Activated CD4-positive, alpha-beta memory T cell treated with anti-CD3 and anti-CD28 coated beads for 36 hours (primary cell): ENCODE measurements at regions of chr6 and their contacts with region 1.

Region 1: GRCh38 chr6:16514249-16514648 is 247.0 kb downstream of the ATXN1 start:
- DNase-seq: peak; percentile 39
- H3K4me3 Mint-ChIP-seq: no peak overlapping the region
- H3K27ac Mint-ChIP-seq: no peak overlapping the region
- H3K4me1 Mint-ChIP-seq: peaks cover 79% of the 10 kb centered on the region
- H3K27me3 Mint-ChIP-seq: no peaks in the 10 kb centered on the region

Region 2: DNA sequence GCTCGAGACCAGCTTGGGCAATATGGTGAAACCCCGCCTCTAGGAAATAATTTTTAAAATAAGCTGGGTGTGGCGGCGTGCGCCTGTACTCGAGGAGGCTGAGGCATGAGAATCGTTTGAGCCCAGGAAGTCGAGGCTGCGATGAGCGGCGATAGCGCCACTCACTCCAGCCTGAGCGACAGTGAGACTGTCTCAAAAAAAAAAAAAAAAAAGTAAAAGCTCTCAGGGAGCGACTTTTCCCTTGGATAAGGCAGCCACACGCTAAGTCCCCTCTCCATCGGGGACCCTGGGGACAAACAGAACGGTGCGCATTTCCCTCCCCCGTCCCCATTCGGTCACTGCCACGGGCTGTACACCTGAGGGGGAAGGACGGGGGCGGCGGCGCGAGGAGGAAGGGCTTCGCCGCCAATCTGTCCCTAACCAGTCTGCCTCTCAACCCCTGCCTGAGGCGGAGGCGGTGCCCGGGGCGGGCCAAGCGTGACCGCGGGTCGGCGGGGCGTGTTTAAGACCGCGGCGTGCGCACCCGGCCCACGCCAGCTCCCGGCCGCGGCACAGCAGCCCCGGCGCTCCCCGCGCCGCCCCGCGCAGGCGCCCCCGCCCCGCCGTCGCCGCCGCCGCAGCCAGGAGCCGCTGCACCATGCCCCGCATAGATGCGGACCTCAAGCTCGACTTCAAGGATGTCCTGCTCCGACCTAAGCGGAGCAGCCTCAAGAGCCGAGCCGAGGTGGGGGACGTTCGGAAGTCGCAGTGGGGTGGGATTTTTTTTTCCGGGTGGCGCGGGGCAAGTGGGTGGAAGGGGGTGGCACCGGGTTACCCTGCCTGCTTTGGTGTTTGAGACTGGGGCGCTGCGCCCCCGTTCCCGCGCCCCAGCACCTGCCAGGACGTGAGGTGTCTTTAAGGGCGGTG is 275.9 kb before region 1 on chr6 and contains the start of gene GMPR:
- CTCF ChIA-PET with region 1: no interaction called
- POLR2A ChIA-PET with region 1: no interaction called
- intact Hi-C with region 1: no loop called
- DNase-seq: peak; percentile 82
- H3K4me3 Mint-ChIP-seq: peak within 1 kb of the TSS; percentile 75
- H3K27ac Mint-ChIP-seq: no peak within 1 kb of the TSS
- H3K4me1 Mint-ChIP-seq: peaks cover 23% of the 10 kb centered on the region
- H3K27me3 Mint-ChIP-seq: peaks cover 40% of the 10 kb centered on the region
- total RNA-seq, gene GMPR: 0.68 to 0.97 TPM

Region 3: GRCh38 chr6:16332175-16332542 is 182.1 kb before region 1 on chr6:
- CTCF ChIA-PET with region 1: interaction called, 10 read pairs
- POLR2A ChIA-PET with region 1: no interaction called
- intact Hi-C with region 1: loop called (anchors 1 kb)
- DNase-seq: peak; percentile 91
- H3K4me3 Mint-ChIP-seq: no peak overlapping the region
- H3K27ac Mint-ChIP-seq: no peak overlapping the region
- H3K4me1 Mint-ChIP-seq: peaks cover 9% of the 10 kb centered on the region
- H3K27me3 Mint-ChIP-seq: no peaks in the 10 kb centered on the region

Region 4: DNA sequence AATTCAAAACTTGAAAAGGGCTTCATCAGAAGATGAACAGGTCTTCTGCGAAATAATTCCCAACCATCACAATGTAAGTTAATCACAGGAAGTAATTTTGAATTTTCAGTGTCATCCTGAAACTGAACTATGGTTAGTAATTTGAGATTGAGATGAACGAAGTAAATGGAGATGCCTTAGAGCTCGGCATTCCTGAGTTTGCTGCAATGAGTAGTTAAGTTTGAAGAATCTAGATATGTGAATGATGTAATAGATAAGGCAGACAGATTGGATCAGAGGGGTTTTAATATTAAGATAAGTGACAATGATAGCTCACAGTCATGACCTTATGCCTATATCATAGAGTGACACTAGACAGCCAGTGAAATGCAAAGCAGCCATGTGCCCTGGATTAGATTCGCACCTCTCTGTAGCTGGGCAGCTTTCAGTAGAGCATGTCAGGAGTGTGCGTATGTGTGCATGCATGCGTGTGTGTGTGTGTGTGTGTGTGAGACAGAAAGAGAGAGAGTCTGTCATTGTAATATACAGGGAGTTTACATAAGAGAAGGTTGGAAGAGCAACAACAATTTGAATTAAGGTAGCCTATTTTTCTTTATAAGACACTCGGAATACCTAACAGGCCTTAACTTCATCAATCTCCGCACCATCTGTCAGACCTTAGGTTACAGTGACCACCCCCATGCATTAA is 42.9 kb before region 1 on chr6:
- CTCF ChIA-PET with region 1: interaction called, 23 read pairs
- POLR2A ChIA-PET with region 1: interaction called, 7 read pairs
- intact Hi-C with region 1: loop called (anchors 1 kb)
- DNase-seq: no peak
- H3K4me3 Mint-ChIP-seq: no peak overlapping the region
- H3K27ac Mint-ChIP-seq: peak overlapping the region; percentile 69
- H3K4me1 Mint-ChIP-seq: peaks cover 88% of the 10 kb centered on the region
- H3K27me3 Mint-ChIP-seq: no peaks in the 10 kb centered on the region

Region 5: GRCh38 chr6:16503970-16504415 is 10.3 kb before region 1 on chr6:
- CTCF ChIA-PET with region 1: interaction called, 19 read pairs
- POLR2A ChIA-PET with region 1: no interaction called
- intact Hi-C with region 1: no loop called
- DNase-seq: no peak
- H3K4me3 Mint-ChIP-seq: no peak overlapping the region
- H3K27ac Mint-ChIP-seq: no peak overlapping the region
- H3K4me1 Mint-ChIP-seq: peaks cover 47% of the 10 kb centered on the region
- H3K27me3 Mint-ChIP-seq: no peaks in the 10 kb centered on the region

Region 6: GRCh38 chr6:16651871-16652270 is 137.6 kb after region 1 on chr6:
- CTCF ChIA-PET with region 1: interaction called, 13 read pairs
- POLR2A ChIA-PET with region 1: interaction called, 3 read pairs
- intact Hi-C with region 1: loop called (anchors 5 kb)
- DNase-seq: no peak
- H3K4me3 Mint-ChIP-seq: peak overlapping the region; percentile 2
- H3K27ac Mint-ChIP-seq: no peak overlapping the region
- H3K4me1 Mint-ChIP-seq: peaks cover 60% of the 10 kb centered on the region
- H3K27me3 Mint-ChIP-seq: no peaks in the 10 kb centered on the region

Region 7: GRCh38 chr6:16712931-16713484 is 198.8 kb after region 1 on chr6:
- CTCF ChIA-PET with region 1: interaction called, 5 read pairs
- POLR2A ChIA-PET with region 1: no interaction called
- intact Hi-C with region 1: loop called (anchors 1 kb)
- DNase-seq: peak; percentile 62
- H3K4me3 Mint-ChIP-seq: peak overlapping the region; percentile 64
- H3K27ac Mint-ChIP-seq: peak overlapping the region; percentile 92
- H3K4me1 Mint-ChIP-seq: peaks cover 70% of the 10 kb centered on the region
- H3K27me3 Mint-ChIP-seq: no peaks in the 10 kb centered on the region

Region 8: DNA sequence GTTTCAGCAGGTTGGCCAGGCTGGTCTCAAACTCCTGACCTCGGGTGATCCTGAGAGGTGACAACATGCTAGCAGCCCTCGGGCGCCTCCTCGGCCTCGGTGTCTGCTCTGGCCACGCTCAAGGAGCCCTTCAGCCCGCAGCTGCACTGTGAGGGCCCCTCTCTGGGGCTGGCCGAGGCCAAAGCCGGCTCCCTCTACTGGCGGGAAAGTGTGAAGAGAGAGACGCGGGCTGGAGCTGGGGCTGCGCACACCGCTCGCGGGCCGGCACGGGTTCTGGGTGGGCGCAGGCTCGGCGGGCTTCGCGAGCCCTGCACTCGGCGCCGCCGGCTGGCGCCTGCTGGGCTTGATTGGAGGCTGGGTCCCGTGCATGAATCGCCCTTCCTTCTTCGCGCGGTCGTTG is 686.1 kb after region 1 on chr6:
- CTCF ChIA-PET with region 1: no interaction called
- POLR2A ChIA-PET with region 1: no interaction called
- intact Hi-C with region 1: no loop called
- DNase-seq: no peak
- H3K4me3 Mint-ChIP-seq: no peak overlapping the region
- H3K27ac Mint-ChIP-seq: no peak overlapping the region
- H3K4me1 Mint-ChIP-seq: no peaks in the 10 kb centered on the region
- H3K27me3 Mint-ChIP-seq: no peaks in the 10 kb centered on the region